GM18951 (cell line): ENCODE measurements at regions of chr2 and their contacts with region 1.

Region 1: GRCh38 chr2:160109936-160110673 is 47.7 kb upstream of the PLA2R1 start:
- POLR2A ChIP-seq: no peak

Region 2: DNA sequence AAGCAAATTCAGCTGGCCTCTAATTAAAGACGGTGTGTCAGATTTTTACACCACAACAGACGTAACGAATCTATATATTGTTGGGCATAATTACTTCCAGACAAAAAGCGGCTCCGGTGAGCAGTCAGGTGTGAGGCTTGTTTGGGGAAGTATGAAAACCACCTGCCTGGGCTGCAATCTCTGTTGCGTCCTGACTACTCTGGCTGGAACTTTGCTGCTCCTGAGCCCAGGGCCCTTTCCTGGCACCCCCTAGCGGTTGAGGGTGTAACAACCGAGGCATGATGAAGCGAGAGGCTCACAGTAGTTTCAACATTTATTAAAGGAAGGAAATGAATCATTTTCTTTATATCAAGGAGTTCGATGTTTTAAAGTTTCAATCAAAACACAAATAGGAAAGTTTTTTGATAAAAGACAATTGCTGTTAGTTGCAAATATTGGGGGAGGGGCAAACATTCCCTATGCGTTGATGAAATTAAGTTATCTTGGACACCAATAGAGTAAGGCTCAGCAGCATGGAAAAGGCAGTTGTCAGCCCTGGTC is 100.6 kb after region 1 on chr2:
- in situ Hi-C with region 1: loop called (anchors 10 kb)
- POLR2A ChIP-seq: no peak